Cardiac septum (tissue), 1 donor: ENCODE measurements at regions of chr12 and their contacts with region 1.

Region 1: DNA sequence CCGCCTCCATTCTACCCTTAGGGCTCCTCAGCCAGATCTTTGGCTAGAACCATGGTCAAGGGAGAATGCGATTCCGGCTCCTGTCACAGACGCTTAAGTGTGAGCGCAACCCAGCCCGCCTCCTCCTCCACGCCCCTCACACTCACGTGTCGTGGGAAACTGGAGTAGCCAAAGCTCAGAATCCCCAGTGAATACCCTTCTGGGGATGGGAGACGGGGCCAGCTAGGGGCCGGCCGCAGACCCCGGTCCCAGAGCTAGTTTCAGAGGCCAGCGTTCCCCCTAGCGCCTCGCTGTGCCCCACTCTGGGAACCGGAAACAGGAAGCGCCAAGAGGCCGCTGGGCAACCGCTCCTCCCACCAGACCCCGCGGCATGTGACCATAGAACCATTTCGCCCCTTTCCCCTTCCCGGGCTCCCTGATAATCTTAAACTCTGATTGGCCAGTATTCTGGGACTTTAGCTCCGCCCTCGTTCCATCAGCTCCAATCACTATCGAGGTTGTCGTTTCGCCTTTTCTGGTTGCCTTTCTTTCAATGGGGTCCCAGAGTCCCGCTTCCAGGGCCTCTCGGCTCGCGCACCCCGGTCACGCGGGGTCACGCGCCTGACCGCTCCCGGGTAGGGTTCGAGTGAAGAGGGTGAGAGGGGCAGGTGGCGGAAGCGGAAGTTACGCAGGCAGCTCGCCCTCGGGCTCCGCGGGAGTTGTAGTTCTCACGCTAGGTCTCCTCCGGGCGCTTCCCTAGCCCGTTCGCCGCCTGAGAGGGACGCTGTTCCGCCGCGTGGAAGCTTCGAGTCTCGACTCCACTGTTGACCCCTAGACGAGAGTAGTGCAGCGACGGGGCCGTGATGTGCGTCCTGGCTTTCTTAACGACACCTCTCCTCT is at the start of gene M6PR:
- DNase-seq: peak; percentile 97
- total RNA-seq, gene M6PR: 87.1 TPM

Region 2: DNA sequence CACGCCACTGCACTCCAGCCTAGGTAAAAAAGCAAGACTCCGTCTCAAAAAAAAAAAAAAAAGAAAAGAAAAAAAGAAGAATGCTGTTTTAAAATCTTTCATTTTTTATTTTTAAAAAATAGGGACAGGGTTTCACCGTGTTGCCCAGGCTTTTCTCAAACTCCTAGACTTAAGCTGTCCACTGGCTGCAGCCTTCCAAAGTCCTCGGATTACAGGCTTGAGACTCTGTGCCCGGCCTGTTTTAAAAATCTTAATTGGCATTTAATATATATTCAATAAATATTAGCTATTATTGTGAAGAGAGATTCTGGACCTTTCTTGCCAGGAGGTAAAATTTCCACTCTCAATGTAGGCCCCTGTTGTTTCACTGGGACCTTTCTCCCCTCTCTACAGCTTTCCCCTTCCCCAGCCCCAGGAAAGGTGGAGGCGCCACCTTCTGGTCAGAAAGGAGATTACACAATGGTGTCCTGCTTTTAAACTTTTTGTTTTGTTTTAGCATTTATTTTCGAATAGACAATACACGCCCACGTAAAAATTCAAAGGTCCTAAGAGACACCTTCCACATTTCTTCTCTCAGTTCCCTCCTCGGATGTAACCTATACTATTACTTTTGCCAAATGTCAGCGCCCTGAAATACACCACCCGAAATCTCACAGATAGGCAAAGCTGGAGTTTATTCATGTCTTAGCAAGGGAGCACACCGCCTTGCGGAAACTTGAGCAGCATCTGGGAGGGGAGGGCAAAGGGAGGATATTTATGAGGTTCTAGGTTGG is 59.1 kb before region 1 on chr12:
- intact Hi-C with region 1: no loop called
- DNase-seq: no peak

Region 3: DNA sequence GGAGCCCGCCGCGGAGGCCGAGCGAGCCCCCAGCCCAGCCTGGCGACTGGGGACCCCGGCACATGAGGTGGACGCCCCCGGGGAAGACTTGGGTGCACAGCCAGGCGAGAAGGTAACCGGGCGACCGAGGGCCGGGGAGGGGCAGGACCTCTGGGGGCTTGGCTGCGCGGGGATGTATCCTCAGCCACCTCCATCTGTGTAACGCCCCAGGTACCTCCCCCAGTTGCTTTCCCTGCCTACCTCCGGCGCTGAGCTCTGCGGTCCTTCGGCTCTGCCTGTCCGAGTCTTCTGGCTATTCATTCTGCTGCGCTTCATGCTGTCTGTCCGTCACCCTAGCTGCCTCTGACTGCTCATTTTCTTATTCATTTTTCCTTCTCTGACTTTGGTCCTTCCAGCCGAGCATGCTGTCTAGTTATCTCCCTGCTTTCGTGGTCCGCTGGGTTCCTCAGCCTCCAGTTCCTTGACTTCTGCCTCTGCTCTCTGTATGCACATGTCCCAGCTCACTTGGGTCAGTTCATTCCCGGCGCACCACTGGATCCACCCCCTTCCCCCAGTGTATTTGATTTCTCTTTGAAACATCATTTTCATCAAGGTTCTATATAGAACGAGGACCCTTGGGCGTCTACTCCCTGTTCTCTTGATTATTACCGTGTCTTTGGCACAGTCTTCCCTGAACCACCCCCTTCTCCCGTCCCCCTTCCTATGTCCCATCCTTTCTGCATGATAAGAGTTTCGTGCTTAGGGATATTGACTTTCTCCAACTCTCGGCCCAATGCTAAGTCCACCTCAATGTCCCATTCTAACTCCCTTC is 34.7 kb before region 1 on chr12:
- intact Hi-C with region 1: loop called (anchors 2 kb)
- DNase-seq: no peak

Region 4: DNA sequence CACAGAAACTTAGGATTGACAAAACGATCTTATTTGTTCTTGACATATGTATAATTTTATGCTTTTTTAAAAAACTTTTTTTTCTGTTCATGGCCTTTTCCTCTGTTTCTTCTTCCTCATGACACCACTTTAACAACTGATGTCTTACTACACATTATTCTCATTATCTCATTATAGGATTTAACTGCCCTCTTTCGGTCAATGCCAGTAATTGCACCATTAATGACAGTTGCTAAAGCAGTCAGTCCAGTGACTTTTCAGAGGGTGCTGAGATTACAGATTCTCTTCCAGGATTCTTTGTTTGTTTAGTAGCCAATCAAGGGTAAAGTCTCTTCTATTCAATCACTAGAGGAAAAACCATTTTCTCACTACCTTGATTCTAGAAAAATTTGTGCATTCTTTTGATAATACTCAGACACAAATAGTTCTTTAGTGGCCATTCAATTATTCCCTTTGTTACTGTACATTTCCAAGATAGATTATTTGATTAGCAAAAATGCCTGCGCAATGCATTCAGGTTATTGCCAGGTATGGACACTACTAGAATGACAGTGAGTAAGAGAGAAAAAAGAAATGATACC is 89.9 kb after region 1 on chr12:
- intact Hi-C with region 1: loop called (anchors 2 kb)
- DNase-seq: no peak